Activated CD8-positive, alpha-beta T cell treated with anti-CD3 and anti-CD28 coated beads, Interleukin-2, amount 10 ng/mL, durations not matched to agents 7 days and 5 days (primary cell): ENCODE measurements at regions of chr7 and their contacts with region 1.

Region 1: GRCh38 chr7:99312316-99313203 is 13.1 kb upstream of the ARPC1A start:
- DNase-seq: peak; percentile 83
- ATAC-seq: peak; percentile 80
- H3K4me3 Mint-ChIP-seq: peak overlapping the region; percentile 36
- H3K27ac Mint-ChIP-seq: no peak overlapping the region
- H3K4me1 Mint-ChIP-seq: peaks cover 24% of the 10 kb centered on the region
- H3K27me3 Mint-ChIP-seq: peaks cover 10% of the 10 kb centered on the region

Region 2: GRCh38 chr7:98968621-98969020 is 343.9 kb before region 1 on chr7:
- CTCF ChIA-PET with region 1: no interaction called
- POLR2A ChIA-PET with region 1: no interaction called
- DNase-seq: no peak
- ATAC-seq: no peak
- H3K4me3 Mint-ChIP-seq: no peak overlapping the region
- H3K27ac Mint-ChIP-seq: no peak overlapping the region
- H3K4me1 Mint-ChIP-seq: no peaks in the 10 kb centered on the region
- H3K27me3 Mint-ChIP-seq: no peaks in the 10 kb centered on the region

Region 3: DNA sequence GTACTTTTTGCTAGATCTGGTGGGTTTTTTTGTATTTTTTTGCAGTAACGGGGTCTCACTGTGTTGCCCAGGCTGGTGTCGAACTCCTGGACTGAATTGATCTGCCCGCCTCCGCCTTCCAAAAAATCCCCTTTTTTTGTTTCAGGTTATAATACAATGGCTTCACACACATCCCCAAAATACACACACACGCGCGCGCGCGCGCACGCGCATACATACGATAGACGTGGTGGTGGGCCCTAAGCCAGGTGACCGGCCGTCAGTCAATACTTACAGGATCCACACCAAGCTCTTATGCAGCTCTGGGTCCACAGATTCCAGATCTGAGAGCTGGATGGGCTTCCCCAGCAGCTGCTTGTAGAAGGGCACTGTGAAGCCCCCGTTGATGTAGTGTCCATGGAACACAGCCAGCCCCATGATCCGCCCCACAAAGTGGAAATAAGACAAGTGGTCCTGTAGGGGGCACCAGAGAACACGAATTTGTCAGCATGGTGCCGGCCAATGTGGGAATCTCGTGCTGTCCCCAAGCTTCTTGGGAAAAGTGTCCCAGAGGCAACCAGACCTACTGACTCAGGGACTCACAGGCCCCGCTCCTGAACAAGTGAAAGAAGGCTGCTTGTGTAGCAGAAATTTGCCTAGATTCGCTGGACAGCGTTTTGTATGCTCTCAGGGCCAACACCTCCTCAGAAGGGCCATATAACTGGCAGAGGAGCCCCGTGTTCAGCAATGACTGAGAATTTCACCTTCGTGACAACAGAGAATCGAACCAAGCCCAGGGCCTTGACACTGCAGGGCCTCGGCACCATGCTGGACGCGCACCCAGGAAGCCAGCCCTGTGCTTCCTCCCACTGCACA is 272.2 kb before region 1 on chr7:
- CTCF ChIA-PET with region 1: interaction called, 15 read pairs
- POLR2A ChIA-PET with region 1: no interaction called
- DNase-seq: peak; percentile 72
- ATAC-seq: peak; percentile 64
- H3K4me3 Mint-ChIP-seq: no peak overlapping the region
- H3K27ac Mint-ChIP-seq: no peak overlapping the region
- H3K4me1 Mint-ChIP-seq: no peaks in the 10 kb centered on the region
- H3K27me3 Mint-ChIP-seq: no peaks in the 10 kb centered on the region

Region 4: DNA sequence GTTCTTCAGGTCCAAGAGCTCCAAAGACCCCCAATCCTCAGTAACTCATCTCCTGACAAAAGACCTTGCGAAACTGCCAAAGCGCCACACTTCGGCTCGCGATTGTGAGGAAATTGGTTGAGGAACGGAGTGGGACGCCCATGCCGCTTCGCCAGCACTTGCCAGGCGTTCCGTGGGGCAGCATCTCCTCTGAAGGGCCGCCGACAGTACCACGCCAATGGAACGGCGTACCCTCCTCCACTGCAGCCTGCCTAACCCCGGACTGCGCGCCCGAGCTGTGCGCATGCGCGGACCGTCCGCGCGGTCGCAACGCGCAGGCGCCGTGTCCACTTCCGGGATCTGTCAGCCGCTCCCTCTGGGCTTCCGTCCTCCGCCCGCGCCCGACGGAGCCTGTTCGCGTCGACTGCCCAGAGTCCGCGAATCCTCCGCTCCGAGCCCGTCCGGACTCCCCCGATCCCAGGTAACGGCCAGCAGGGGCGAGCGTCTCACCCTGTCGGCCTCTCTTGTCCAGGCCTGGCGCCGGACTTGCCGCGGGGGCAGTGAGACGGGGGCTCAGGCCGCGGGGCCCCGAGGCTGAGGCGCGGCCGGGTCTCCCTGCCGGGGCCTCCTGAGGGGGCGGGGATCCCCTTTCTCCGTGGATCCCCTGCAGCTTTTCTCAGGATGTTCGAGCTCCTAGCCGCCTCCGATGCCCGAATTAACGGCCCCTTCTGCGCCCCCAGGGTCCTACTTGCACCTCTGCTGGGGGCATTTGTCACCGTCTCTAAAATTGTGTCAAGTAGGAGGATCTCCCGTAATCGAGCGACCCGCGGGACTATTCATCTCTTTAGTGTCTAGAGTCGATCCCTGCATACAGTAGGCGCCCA is 13.2 kb after region 1 on chr7 and contains the start of gene ARPC1A:
- CTCF ChIA-PET with region 1: interaction called, 36 read pairs
- POLR2A ChIA-PET with region 1: interaction called, 5 read pairs
- DNase-seq: peak; percentile 92
- ATAC-seq: peak; percentile 97
- H3K4me3 Mint-ChIP-seq: peak within 1 kb of the TSS; percentile 84
- H3K27ac Mint-ChIP-seq: peak within 1 kb of the TSS; percentile 91
- H3K4me1 Mint-ChIP-seq: peaks cover 41% of the 10 kb centered on the region
- H3K27me3 Mint-ChIP-seq: peaks cover 3% of the 10 kb centered on the region
- total RNA-seq, gene ARPC1A: 51.4 to 56.1 TPM